CD4-positive, alpha-beta T cell (primary cell): ENCODE measurements at regions of chr11 and their contacts with region 1.

Region 1: GRCh38 chr11:35298369-35298768 is 121.0 kb downstream of the SLC1A2 start:
- DNase-seq: no peak
- ATAC-seq: no peak
- H3K4me3 ChIP-seq: no peak overlapping the region
- H3K4me3 Mint-ChIP-seq: no peak overlapping the region
- H3K27ac ChIP-seq: no peak overlapping the region
- H3K27ac Mint-ChIP-seq: no peak overlapping the region
- H3K4me1 ChIP-seq: no peaks in the 10 kb centered on the region
- H3K4me1 Mint-ChIP-seq: peaks cover under 1% of the 10 kb centered on the region
- H3K27me3 ChIP-seq: no peaks in the 10 kb centered on the region
- H3K27me3 Mint-ChIP-seq: no peaks in the 10 kb centered on the region
- CTCF ChIP-seq: no peak

Region 2: GRCh38 chr11:35255514-35255913 is 42.9 kb before region 1 on chr11:
- CTCF ChIA-PET with region 1: no interaction called
- POLR2A ChIA-PET with region 1: no interaction called
- intact Hi-C with region 1: loop called in 1 of 2 experiments (anchors 2 kb)
- DNase-seq: no peak
- ATAC-seq: no peak
- H3K4me3 ChIP-seq: no peak overlapping the region
- H3K4me3 Mint-ChIP-seq: no peak overlapping the region
- H3K27ac ChIP-seq: no peak overlapping the region
- H3K27ac Mint-ChIP-seq: peak overlapping the region; percentile 45
- H3K4me1 ChIP-seq: peaks cover 15% of the 10 kb centered on the region
- H3K4me1 Mint-ChIP-seq: peaks cover 23% of the 10 kb centered on the region
- H3K27me3 ChIP-seq: no peaks in the 10 kb centered on the region
- H3K27me3 Mint-ChIP-seq: no peaks in the 10 kb centered on the region
- CTCF ChIP-seq: no peak